ENCODE measurements at regions of chr9 and their contacts with region 1.

Region 1: DNA sequence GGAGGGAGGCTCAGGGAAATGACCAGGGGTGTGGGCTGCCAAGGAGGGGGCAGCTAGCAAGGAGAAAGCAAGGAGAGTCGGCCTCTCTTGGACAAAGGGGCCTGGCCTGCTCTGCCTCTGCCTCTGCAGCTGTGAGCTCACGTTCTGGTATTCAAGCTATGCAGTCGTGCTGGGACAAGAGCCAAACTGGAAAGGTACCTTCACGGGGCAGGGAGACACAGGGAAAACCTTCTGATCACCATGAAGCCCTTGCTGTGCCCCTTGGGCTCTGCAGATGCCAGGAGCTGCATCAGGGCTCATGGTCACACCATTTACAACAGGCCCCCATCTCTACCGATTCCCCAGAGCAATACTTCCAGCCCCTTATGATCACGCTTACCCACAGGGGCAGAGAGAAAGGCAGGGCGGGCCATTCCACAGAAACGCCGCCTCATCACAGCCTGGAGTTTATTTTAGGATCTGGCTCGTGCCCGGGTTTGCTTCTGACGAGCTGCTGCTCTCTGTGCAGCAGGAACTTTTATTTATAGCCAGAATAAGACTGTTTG is 63.2 kb downstream of the PRRT1B start:
- DNase-seq: peak; percentile 94 to 97
- H3K4me3 ChIP-seq: no peak overlapping the region
- H3K27ac ChIP-seq: peak overlapping the region; percentile 85 to 92 (median 89)
- H3K4me1 ChIP-seq: peaks cover 19 to 26% of the 10 kb centered on the region in 2 donors
- H3K27me3 ChIP-seq: no peaks in the 10 kb centered on the region
- CTCF ChIP-seq: no peak
- POLR2A ChIP-seq: peak in 1 of 2 donors; percentile 43

Region 2: GRCh38 chr9:131402738-131403492 is 205.7 kb before region 1 on chr9:
- intact Hi-C with region 1: no loop called
- DNase-seq: peak; percentile 84 to 90
- H3K4me3 ChIP-seq: no peak overlapping the region
- H3K27ac ChIP-seq: peak overlapping the region; percentile 13 to 66 (median 37)
- H3K4me1 ChIP-seq: peaks cover 69 to 93% of the 10 kb centered on the region in 2 donors
- H3K27me3 ChIP-seq: no peaks in the 10 kb centered on the region
- CTCF ChIP-seq: no peak
- POLR2A ChIP-seq: peak in 1 of 2 donors; percentile 22

Region 3: GRCh38 chr9:131432597-131433306 is 175.8 kb before region 1 on chr9:
- intact Hi-C with region 1: no loop called
- DNase-seq: no peak
- H3K4me3 ChIP-seq: no peak overlapping the region
- H3K27ac ChIP-seq: no peak overlapping the region
- H3K4me1 ChIP-seq: peaks cover 10 to 11% of the 10 kb centered on the region in 2 donors
- H3K27me3 ChIP-seq: no peaks in the 10 kb centered on the region
- CTCF ChIP-seq: no peak
- POLR2A ChIP-seq: no peak

Region 4: DNA sequence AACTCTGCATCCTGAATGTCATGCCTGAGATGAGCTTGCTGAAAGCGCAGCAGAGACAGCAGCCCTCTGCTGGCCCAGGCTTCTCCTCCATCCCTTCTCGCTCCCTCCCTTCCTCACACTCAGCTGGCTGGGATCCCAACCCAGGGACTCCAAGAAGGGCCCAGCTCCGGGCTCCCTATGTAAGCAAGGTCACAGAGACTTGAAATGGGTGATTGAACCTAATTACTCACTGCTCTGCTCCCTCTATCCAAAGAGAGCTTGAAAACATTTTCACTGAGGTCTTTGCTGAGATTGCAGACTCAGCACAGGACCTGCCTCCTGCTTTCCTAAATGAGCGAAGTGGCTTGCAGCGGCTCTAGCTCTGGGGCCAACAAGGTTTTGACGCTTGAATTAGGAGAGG is 88.5 kb after region 1 on chr9:
- intact Hi-C with region 1: loop called (anchors 5 kb)
- DNase-seq: peak; percentile 95 to 96
- H3K4me3 ChIP-seq: no peak overlapping the region
- H3K27ac ChIP-seq: peak overlapping the region; percentile 46 to 73 (median 67)
- H3K4me1 ChIP-seq: peaks cover 43 to 62% of the 10 kb centered on the region in 2 donors
- H3K27me3 ChIP-seq: no peaks in the 10 kb centered on the region
- CTCF ChIP-seq: peak in 4 of 6 experiments; percentile 28 to 41 (median 30)
- POLR2A ChIP-seq: peak in 1 of 2 donors; percentile 12

Measured in thyroid gland (tissue), 4 donors.